GM10248 (cell line): ENCODE measurements at regions of chr12 and their contacts with region 1.

Region 1: GRCh38 chr12:54404061-54405004 is 14.7 kb downstream of the ITGA5 start:
- DNase-seq: peak; percentile 69
- CTCF ChIP-seq: peak; percentile 91

Region 2: GRCh38 chr12:54390668-54391551 is 13.4 kb before region 1 on chr12:
- CTCF ChIA-PET with region 1: interaction called, 280 read pairs
- POLR2A ChIA-PET with region 1: no interaction called
- DNase-seq: peak; percentile 91
- CTCF ChIP-seq: peak; percentile 36